ENCODE measurements at regions of chr19 and their contacts with region 1.

Region 1: GRCh38 chr19:19618219-19619051 is at the start of gene PBX4:
- DNase-seq: peak; percentile 99
- H3K4me3 Mint-ChIP-seq: peak within 1 kb of the TSS; percentile 81
- H3K27ac Mint-ChIP-seq: peak within 1 kb of the TSS; percentile 46
- H3K4me1 Mint-ChIP-seq: peaks cover 43% of the 10 kb centered on the region
- H3K27me3 Mint-ChIP-seq: no peaks in the 10 kb centered on the region
- total RNA-seq, gene PBX4: 13.5 to 17.5 TPM

Region 2: GRCh38 chr19:19562665-19563347 is 55.6 kb before region 1 on chr19:
- CTCF ChIA-PET with region 1: no interaction called
- intact Hi-C with region 1: loop called (anchors 2 kb)
- DNase-seq: peak; percentile 65
- H3K4me3 Mint-ChIP-seq: no peak overlapping the region
- H3K27ac Mint-ChIP-seq: peak overlapping the region; percentile 50
- H3K4me1 Mint-ChIP-seq: peaks cover 22% of the 10 kb centered on the region
- H3K27me3 Mint-ChIP-seq: no peaks in the 10 kb centered on the region

Region 3: DNA sequence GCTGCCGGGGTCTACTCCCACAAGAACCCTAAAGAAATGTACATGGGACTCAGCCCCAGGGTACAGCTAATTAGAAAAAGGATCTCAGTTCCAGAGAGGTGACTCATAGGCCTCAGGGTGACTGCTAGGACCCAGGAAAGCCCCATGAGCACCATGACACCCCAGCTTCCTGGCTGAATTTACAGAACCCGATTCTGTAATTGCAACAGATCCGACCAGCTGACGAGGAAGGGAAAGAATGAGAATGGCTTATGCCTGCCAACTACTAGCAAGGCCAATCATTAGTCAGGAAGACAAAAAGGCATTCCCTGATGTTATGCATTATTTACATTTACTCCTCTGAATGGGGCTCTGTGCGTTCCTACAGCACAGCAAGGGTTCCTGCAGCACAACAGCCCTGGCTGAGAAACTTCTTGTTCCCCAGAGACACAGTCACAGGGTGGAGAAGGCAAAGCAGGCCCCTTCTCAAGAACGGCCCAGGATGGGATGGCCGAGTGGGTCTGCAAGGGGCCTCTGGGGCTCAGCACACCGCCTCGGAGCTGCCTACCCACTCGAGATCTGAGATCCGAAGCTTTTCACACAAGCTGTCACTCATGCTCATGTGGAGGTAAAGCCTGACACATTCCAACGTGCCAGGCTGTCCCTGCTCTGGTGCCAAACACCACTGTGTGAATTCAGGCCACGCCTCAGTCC is 27.2 kb before region 1 on chr19:
- CTCF ChIA-PET with region 1: interaction called, 3 read pairs
- intact Hi-C with region 1: loop called (anchors 1 kb)
- DNase-seq: peak; percentile 91
- H3K4me3 Mint-ChIP-seq: peak overlapping the region; percentile 47
- H3K27ac Mint-ChIP-seq: peak overlapping the region; percentile 93
- H3K4me1 Mint-ChIP-seq: peaks cover 71% of the 10 kb centered on the region
- H3K27me3 Mint-ChIP-seq: no peaks in the 10 kb centered on the region

Region 4: DNA sequence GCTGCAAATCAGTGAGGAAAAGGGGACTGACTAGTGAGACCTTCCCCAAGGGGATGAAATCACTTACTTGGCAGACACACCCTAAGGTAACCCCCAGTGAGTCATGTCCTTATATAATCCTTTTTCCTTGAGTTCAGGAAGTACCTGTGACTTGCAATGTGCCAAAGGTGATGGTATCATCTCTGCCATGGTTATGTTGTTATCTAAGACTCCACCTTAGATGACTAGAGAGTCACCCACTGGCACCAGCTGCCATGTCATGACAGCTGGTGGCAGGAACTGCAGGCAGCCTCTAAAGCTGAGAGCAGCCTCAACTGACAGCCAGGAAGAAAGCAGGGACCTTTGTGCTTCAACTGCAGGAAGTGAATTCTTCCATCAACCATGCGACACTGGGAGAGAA is 12.4 kb before region 1 on chr19:
- CTCF ChIA-PET with region 1: interaction called, 5 read pairs
- intact Hi-C with region 1: loop called (anchors 1 kb)
- DNase-seq: peak; percentile 77
- H3K4me3 Mint-ChIP-seq: peak overlapping the region; percentile 19
- H3K27ac Mint-ChIP-seq: peak overlapping the region; percentile 89
- H3K4me1 Mint-ChIP-seq: peaks cover 67% of the 10 kb centered on the region
- H3K27me3 Mint-ChIP-seq: no peaks in the 10 kb centered on the region